ENCODE measurements at regions of chr10 and their contacts with region 1.

Region 1: GRCh38 chr10:20858292-20859124 is 38.6 kb downstream of the NEBL start:
- DNase-seq: peak in 1 of 9 experiments; percentile 20
- ATAC-seq: no peak
- H3K4me3 ChIP-seq: no peak overlapping the region
- H3K4me3 Mint-ChIP-seq: no peak overlapping the region
- H3K27ac ChIP-seq: no peak overlapping the region
- H3K27ac Mint-ChIP-seq: no peak overlapping the region
- H3K4me1 ChIP-seq: no peaks in the 10 kb centered on the region
- H3K4me1 Mint-ChIP-seq: no peaks in the 10 kb centered on the region
- H3K27me3 ChIP-seq: no peaks in the 10 kb centered on the region
- H3K27me3 Mint-ChIP-seq: no peaks in the 10 kb centered on the region
- CTCF ChIP-seq: no peak

Region 2: DNA sequence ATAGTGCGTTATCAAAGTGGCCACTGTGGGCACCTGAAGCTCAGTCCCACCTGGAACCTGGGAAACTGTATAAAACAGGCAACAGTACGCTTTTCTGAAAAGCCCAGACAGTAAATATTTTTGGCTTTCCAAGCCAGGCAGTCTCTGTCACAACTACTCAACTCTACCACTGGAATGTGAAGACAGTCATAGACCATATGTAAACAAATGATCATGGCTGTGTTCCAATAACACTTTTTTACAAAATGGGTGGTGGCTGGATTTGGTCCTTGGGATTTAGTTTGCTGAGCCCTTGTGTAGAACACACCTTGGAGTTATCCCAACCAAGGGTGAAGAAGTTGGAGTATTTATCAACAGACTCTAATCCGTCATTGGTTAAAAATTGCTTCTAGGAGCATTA is 407.1 kb after region 1 on chr10:
- CTCF ChIA-PET with region 1: no interaction called
- POLR2A ChIA-PET with region 1: no interaction called
- intact Hi-C with region 1: no loop called
- DNase-seq: no peak
- ATAC-seq: no peak
- H3K4me3 ChIP-seq: no peak overlapping the region
- H3K4me3 Mint-ChIP-seq: no peak overlapping the region
- H3K27ac ChIP-seq: no peak overlapping the region
- H3K27ac Mint-ChIP-seq: no peak overlapping the region
- H3K4me1 ChIP-seq: no peaks in the 10 kb centered on the region
- H3K4me1 Mint-ChIP-seq: no peaks in the 10 kb centered on the region
- H3K27me3 ChIP-seq: peaks cover 0 to 2% of the 10 kb centered on the region in 2 experiments
- H3K27me3 Mint-ChIP-seq: no peaks in the 10 kb centered on the region
- CTCF ChIP-seq: no peak

Region 3: DNA sequence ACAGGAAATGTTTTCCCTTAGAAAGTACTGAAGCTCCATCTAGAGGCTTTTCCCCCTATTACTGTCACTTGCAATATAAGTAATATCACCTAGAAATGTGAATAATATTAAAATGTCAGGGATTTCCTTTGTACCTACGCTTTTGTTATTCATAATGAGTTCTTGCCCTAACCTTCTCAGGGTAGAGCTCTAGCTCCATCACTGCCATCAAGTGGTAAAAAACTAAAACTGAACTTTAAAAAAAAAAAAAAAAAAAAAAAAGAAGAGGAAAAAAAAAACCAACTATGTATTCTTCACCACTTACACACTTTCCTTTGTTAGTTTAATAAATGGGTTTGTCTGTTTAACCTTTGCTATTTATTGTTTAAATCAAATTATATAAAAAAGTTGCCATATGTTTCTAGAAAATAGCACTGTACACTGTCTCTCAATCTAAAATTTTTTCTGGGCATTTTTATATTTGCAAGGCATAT is 1095.1 kb after region 1 on chr10:
- CTCF ChIA-PET with region 1: no interaction called
- POLR2A ChIA-PET with region 1: no interaction called
- intact Hi-C with region 1: loop called in 1 of 2 experiments (anchors 5 kb)
- DNase-seq: peak in 2 of 9 experiments; percentile 34 to 59
- ATAC-seq: peak; percentile 44
- H3K4me3 ChIP-seq: no peak overlapping the region
- H3K4me3 Mint-ChIP-seq: no peak overlapping the region
- H3K27ac ChIP-seq: no peak overlapping the region
- H3K27ac Mint-ChIP-seq: no peak overlapping the region
- H3K4me1 ChIP-seq: no peaks in the 10 kb centered on the region
- H3K4me1 Mint-ChIP-seq: no peaks in the 10 kb centered on the region
- H3K27me3 ChIP-seq: no peaks in the 10 kb centered on the region
- H3K27me3 Mint-ChIP-seq: no peaks in the 10 kb centered on the region
- CTCF ChIP-seq: peak; percentile 59